AG04450 (cell line): ENCODE measurements at regions of chrX and their contacts with region 1.

Region 1: DNA sequence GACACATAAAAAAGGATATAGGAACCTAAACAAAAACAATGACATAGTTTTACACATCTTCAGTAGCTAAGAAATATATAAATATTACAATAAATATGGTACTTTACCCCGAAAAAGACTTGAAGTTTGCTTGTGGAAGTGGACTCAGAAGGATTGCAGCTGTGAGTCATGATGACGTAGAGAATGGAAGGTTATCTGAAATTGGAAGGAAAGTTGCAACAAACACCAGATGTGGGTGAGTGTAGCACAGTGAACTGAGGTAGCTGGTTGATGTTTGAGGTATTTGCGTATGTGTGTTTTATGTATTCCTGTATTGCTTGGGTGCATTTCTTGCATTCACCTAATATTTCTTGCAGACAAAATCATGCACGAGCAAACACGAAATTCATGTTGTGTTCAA is 113.0 kb downstream of the ARX start:
- DNase-seq: peak; percentile 75
- H3K4me3 ChIP-seq: no peak overlapping the region
- H3K27ac ChIP-seq: peak overlapping the region; percentile 47
- H3K27me3 ChIP-seq: no peaks in the 10 kb centered on the region
- CTCF ChIP-seq: no peak

Region 2: GRCh38 chrX:24870143-24870542 is 32.7 kb before region 1 on chrX:
- CTCF ChIA-PET with region 1: interaction called, 16 read pairs
- POLR2A ChIA-PET with region 1: no interaction called
- DNase-seq: no peak
- H3K4me3 ChIP-seq: no peak overlapping the region
- H3K27ac ChIP-seq: no peak overlapping the region
- H3K27me3 ChIP-seq: no peaks in the 10 kb centered on the region
- CTCF ChIP-seq: no peak